GM12878 (cell line): ENCODE measurements at regions of chr2 and their contacts with region 1.

Region 1: GRCh38 chr2:219073413-219074129 is 12.8 kb upstream of the IHH start:
- DNase-seq: no peak
- ATAC-seq: peak; percentile 74
- H3K4me3 ChIP-seq: no peak overlapping the region
- H3K27ac ChIP-seq: no peak overlapping the region
- H3K4me1 ChIP-seq: no peaks in the 10 kb centered on the region
- H3K27me3 ChIP-seq: no peaks in the 10 kb centered on the region
- CTCF ChIP-seq: peak; percentile 48 to 62 (median 58)
- EP300 ChIP-seq: no peak
- POLR2A ChIP-seq: no peak
- RAD21 ChIP-seq: peak; percentile 59

Region 2: DNA sequence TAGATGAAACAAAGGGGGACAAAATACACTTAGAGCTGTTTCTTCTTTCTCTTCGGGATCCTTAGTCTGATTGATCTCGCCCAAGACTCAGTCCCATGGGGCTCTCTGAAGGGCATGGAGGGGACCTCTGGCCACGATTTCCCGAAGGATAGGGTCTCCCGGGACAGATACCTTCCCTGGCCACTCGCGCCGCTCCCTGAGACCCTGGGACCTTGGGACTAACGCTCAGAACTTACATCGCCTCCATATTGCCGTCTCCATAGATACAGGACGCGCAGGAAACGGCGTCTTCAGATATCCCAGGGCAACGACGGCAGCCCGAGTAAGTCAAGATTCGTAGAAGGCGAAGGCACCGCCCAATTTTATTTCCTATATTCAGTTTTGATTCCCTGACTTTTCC is 32.3 kb before region 1 on chr2 and contains the start of gene CFAP65:
- CTCF ChIA-PET with region 1: no interaction called
- POLR2A ChIA-PET with region 1: no interaction called
- RAD21 ChIA-PET with region 1: no interaction called
- SMC1A ChIA-PET with region 1: no interaction called
- in situ Hi-C with region 1: no loop called
- intact Hi-C with region 1: no loop called
- DNase-seq: no peak
- ATAC-seq: no peak
- H3K4me3 ChIP-seq: no peak within 1 kb of the TSS
- H3K27ac ChIP-seq: no peak within 1 kb of the TSS
- H3K4me1 ChIP-seq: no peaks in the 10 kb centered on the region
- H3K27me3 ChIP-seq: peaks cover 0 to 13% of the 10 kb centered on the region in 2 experiments; a peak in 2 of 4 replicates
- CTCF ChIP-seq: no peak
- EP300 ChIP-seq: no peak
- POLR2A ChIP-seq: no peak
- RAD21 ChIP-seq: no peak
- polyA plus RNA-seq, gene CFAP65: not detected

Region 3: GRCh38 chr2:219057709-219058540 is 15.6 kb before region 1 on chr2:
- CTCF ChIA-PET with region 1: interaction called, 13 read pairs
- POLR2A ChIA-PET with region 1: no interaction called
- RAD21 ChIA-PET with region 1: interaction called, 7 read pairs
- SMC1A ChIA-PET with region 1: interaction called, 11 read pairs
- in situ Hi-C with region 1: no loop called
- intact Hi-C with region 1: no loop called
- DNase-seq: no peak
- ATAC-seq: peak; percentile 99
- H3K4me3 ChIP-seq: no peak overlapping the region
- H3K27ac ChIP-seq: no peak overlapping the region
- H3K4me1 ChIP-seq: no peaks in the 10 kb centered on the region
- H3K27me3 ChIP-seq: peaks cover 23 to 26% of the 10 kb centered on the region in 2 experiments
- CTCF ChIP-seq: peak; percentile 80 to 93 (median 82)
- EP300 ChIP-seq: no peak
- POLR2A ChIP-seq: no peak
- RAD21 ChIP-seq: peak; percentile 84

Region 4: DNA sequence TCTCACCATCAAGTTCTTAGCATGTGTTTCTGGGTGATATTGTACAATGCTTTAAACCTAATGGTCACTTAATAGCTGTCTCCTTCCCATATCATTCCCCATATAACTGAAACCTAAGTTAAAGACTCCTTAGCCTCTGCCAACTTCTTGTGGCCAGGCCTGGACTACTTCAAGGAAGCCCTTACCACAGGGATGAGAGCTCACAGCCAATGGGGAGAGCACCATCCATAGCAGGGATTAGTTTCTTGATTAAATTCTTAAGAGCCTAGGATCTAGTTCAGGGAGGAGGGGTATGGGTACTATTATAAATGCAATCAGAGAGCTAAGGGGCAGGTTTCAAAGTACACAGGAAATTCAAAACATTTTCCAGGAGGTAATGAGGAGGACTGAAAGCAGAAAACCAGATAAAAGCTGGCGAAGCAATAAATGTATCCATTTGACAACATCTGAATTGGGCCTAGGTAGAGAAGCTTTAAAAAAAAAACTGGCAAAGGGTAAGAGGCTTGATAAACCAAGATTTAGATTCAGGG is 21.9 kb after region 1 on chr2:
- CTCF ChIA-PET with region 1: interaction called, 365 read pairs
- POLR2A ChIA-PET with region 1: interaction called, 10 read pairs
- RAD21 ChIA-PET with region 1: no interaction called
- SMC1A ChIA-PET with region 1: interaction called, 8 read pairs
- in situ Hi-C with region 1: no loop called
- intact Hi-C with region 1: no loop called
- DNase-seq: no peak
- ATAC-seq: no peak
- H3K4me3 ChIP-seq: no peak overlapping the region
- H3K27ac ChIP-seq: no peak overlapping the region
- H3K4me1 ChIP-seq: no peaks in the 10 kb centered on the region
- H3K27me3 ChIP-seq: no peaks in the 10 kb centered on the region
- CTCF ChIP-seq: no peak
- EP300 ChIP-seq: no peak
- POLR2A ChIP-seq: no peak
- RAD21 ChIP-seq: no peak

Region 5: DNA sequence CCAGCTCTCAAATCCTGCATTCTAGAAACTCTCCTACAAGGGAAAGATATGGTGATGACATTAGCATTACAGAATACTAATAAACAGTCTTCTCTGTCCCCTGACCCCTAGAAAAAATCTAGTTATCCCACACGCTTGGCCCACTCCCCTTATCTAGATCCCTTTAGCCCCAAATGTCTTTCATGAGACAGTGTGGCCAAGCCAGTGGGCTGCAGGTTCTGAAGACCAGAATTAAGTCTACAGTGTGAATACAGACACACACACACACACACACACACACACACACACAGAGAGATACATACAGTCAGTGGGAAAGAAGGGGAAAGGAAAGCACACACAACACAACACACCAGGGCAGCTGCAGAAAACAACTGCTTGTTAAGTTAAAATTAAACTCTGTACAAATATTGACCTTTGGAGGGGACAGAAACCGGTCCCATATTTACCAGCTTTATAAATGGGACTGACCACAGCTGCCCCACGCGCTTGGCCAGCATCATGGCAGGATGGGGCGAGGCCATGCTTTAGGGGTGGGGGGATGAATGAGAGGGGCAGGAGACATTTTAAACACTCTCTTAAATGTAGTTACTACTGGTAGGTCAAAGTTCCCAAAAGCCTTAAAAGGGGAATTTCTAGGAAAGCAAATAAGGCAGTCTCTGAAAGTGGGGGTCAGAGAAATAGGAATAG is 37.9 kb after region 1 on chr2:
- CTCF ChIA-PET with region 1: interaction called, 365 read pairs
- POLR2A ChIA-PET with region 1: no interaction called
- RAD21 ChIA-PET with region 1: interaction called, 55 read pairs
- SMC1A ChIA-PET with region 1: interaction called, 4 read pairs
- in situ Hi-C with region 1: no loop called
- intact Hi-C with region 1: no loop called
- DNase-seq: no peak
- ATAC-seq: no peak
- H3K4me3 ChIP-seq: no peak overlapping the region
- H3K27ac ChIP-seq: no peak overlapping the region
- H3K4me1 ChIP-seq: no peaks in the 10 kb centered on the region
- H3K27me3 ChIP-seq: no peaks in the 10 kb centered on the region
- CTCF ChIP-seq: no peak
- EP300 ChIP-seq: no peak
- POLR2A ChIP-seq: no peak
- RAD21 ChIP-seq: no peak

Region 6: DNA sequence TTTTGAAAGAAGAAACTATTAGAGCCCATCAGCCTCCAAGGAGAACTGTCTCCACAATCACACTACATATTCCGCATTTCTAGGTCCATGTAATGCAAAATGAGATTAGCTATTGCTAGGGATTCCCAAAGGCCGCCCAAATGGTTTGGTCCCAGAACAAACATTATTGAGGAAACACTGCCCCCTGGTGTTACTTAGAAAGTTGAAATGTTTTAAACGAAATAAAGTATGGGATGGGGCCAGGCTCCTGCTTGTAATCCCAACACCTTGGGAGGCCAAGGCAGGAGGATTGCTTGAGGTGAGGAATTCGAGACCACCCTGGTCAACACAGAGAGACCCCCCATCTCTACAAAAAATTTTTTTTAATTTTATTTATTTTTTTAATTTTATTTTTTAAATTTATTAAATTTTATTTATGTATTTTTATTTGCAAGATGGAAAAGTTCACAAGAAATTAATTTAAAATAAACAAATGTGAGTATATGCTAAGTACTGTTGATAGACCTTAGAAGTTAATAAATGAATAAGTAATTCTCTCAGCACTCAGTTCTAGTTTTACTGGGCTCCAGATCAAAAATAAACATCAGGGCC is 81.6 kb after region 1 on chr2:
- CTCF ChIA-PET with region 1: interaction called, 89 read pairs
- POLR2A ChIA-PET with region 1: interaction called, 6 read pairs
- RAD21 ChIA-PET with region 1: interaction called, 25 read pairs
- SMC1A ChIA-PET with region 1: interaction called, 49 read pairs
- in situ Hi-C with region 1: no loop called
- intact Hi-C with region 1: loop called (anchors 1 kb)
- DNase-seq: no peak
- ATAC-seq: peak; percentile 77
- H3K4me3 ChIP-seq: no peak overlapping the region
- H3K27ac ChIP-seq: no peak overlapping the region
- H3K4me1 ChIP-seq: peaks cover 4% of the 10 kb centered on the region; the same call in 1 of the 2 replicates
- H3K27me3 ChIP-seq: no peaks in the 10 kb centered on the region
- CTCF ChIP-seq: peak; percentile 37 to 66 (median 39); a peak in 5 of 6 replicates
- EP300 ChIP-seq: no peak
- POLR2A ChIP-seq: no peak
- RAD21 ChIP-seq: peak; percentile 78